Activated B cell treated with CpG ODN at 0.5 μM for 24 hours (primary cell): ENCODE measurements at regions of chr16 and their contacts with region 1.

Region 1: DNA sequence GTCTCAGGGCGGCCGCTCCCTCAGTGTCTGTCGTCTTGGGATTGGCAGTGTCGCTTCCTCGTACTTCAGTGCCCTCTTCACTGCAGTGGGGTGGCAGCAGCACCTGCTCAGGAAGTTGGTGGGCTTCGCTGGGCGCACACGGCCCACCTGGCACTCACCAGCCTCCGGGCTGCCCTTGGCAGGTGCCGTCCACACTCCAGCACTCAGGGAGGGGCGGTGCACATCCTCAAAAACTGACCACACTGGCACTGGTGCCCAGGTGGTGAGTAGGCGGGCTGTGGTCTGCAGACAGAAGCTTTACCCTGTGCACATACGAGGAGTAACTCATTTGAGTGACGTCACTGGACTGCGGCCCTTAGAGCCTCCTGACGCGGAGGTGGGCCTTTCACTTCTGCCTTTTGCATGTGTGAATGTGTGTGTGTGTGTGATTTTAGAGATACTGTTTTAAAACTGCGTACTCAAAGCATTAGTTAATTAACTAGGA is 94.6 kb downstream of the BANP start:
- DNase-seq: peak; percentile 83
- ATAC-seq: peak; percentile 72
- H3K4me3 Mint-ChIP-seq: peak overlapping the region; percentile 77
- H3K27ac Mint-ChIP-seq: peak overlapping the region; percentile 98
- H3K4me1 Mint-ChIP-seq: peaks cover 83% of the 10 kb centered on the region
- H3K27me3 Mint-ChIP-seq: no peaks in the 10 kb centered on the region
- CTCF ChIP-seq: no peak

Region 2: DNA sequence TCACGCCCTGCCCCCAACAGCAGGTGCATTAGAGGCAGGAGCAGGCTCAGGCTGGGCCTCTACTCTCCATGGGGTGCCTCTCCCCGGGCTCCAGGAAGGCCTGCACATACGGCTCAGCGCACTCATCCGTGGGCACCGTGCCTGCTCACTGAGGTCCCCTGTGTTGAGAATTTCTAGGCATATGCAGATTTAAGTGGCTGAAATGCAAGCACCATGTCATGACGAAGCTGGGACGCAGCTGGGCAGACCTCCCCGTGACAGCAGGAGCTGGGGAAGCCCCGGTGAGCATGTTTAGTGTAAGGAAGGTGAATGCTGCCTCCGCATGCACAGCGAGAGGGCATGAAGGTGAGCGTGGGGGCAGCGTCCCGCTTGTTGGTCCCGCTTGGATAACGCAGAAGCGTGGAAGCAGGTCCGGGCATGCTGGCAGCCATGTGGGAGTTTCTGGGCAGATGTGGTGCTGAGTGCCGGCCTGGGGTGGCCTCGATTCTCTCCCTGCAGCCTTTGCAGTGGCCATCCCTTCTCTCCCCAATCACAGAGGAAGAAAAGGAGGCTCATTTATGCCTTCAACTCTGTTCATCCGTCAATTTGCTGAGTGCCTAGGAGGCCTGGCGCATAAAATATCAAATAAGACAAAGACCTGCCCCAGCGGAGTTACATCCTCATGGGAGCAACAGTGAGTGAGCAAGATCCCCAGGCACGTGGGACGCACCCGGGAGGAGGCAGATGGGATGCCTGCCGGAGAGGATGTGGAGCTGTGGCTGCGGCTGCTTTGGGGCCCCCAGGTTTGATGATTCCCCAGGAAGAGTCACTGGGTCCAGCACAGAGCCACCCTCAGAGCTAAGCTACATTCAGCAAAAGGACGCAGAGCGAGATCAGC is 121.2 kb before region 1 on chr16:
- CTCF ChIA-PET with region 1: no interaction called
- POLR2A ChIA-PET with region 1: no interaction called
- intact Hi-C with region 1: loop called (anchors 10 kb)
- DNase-seq: peak; percentile 61
- ATAC-seq: peak; percentile 81
- H3K4me3 Mint-ChIP-seq: peak overlapping the region; percentile 64
- H3K27ac Mint-ChIP-seq: peak overlapping the region; percentile 70
- H3K4me1 Mint-ChIP-seq: peaks cover 35% of the 10 kb centered on the region
- H3K27me3 Mint-ChIP-seq: peaks cover 3% of the 10 kb centered on the region
- CTCF ChIP-seq: no peak

Region 3: DNA sequence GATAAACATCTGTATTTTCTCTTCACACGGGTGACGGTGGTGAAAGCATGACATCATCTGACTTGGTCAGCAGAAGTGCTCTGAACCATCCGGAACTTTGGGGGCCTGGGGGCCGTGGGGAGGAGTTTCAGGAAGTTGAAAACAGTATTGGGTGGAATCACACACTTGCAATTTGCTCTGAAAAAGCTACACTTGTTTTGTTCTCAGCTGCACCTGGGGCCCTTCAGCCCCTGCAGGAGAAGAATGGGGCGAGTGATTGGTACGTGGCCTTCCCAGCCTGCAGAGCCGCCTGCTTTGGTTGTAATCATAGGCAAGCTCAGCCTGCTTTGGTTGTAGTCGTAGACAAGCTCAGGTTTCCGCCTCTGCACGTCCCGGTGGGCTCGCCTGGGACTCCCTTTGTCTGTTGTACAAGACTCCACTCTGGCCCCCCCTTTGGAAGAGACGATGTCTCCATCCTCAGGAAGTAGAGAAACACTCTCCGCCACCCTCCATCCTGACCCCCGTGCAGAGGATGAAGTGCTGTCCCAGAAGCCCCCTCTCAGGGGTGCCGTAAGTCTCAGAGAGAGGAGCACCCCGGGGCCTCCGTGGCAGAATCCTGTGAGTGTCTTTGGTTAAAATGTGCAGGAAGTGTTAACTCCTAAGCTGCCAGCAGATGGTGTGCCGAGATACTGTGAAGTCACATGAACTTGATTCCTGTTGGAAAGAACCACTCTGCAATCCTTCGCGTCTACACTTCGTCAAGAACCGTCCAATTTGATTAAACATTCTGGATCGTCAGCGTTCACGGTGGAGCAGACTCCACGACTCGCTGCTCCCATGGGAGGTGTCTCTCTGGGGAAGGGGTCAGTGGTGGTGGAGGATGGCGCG is 89.3 kb before region 1 on chr16:
- CTCF ChIA-PET with region 1: no interaction called
- POLR2A ChIA-PET with region 1: interaction called, 11 read pairs
- intact Hi-C with region 1: loop called (anchors 1 kb)
- DNase-seq: peak; percentile 51
- ATAC-seq: peak; percentile 52
- H3K4me3 Mint-ChIP-seq: peak overlapping the region; percentile 79
- H3K27ac Mint-ChIP-seq: peak overlapping the region; percentile 91
- H3K4me1 Mint-ChIP-seq: peaks cover 92% of the 10 kb centered on the region
- H3K27me3 Mint-ChIP-seq: no peaks in the 10 kb centered on the region
- CTCF ChIP-seq: no peak

Region 4: GRCh38 chr16:87982491-87983415 is 63.1 kb before region 1 on chr16:
- CTCF ChIA-PET with region 1: no interaction called
- POLR2A ChIA-PET with region 1: no interaction called
- intact Hi-C with region 1: loop called (anchors 10 kb)
- DNase-seq: no peak
- ATAC-seq: no peak
- H3K4me3 Mint-ChIP-seq: peak overlapping the region; percentile 41
- H3K27ac Mint-ChIP-seq: peak overlapping the region; percentile 89
- H3K4me1 Mint-ChIP-seq: peaks cover 44% of the 10 kb centered on the region
- H3K27me3 Mint-ChIP-seq: no peaks in the 10 kb centered on the region
- CTCF ChIP-seq: no peak

Region 5: DNA sequence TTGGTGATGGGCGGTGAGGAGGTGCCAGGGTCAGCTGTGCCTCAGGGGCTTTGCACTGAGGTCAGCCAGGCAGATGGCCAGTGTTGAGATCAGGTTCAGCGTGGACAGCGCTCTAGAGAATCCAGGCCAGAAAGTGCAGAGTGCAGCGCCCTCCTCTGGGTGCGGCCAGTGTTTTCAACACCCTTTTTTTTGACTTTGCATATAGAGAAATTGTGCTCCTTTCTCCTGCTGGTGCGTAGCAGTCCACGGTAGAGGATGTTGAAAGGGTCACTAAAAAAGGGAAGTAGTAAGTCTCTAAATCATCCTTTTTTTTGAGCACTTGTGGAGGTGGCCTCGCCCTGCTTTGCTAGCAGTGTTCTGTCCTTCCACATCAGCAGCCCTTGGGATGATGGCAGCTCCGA is 40.7 kb before region 1 on chr16:
- CTCF ChIA-PET with region 1: no interaction called
- POLR2A ChIA-PET with region 1: no interaction called
- intact Hi-C with region 1: loop called (anchors 2 kb)
- DNase-seq: peak; percentile 20
- ATAC-seq: peak; percentile 91
- H3K4me3 Mint-ChIP-seq: peak overlapping the region; percentile 26
- H3K27ac Mint-ChIP-seq: peak overlapping the region; percentile 61
- H3K4me1 Mint-ChIP-seq: peaks cover 37% of the 10 kb centered on the region
- H3K27me3 Mint-ChIP-seq: no peaks in the 10 kb centered on the region
- CTCF ChIP-seq: no peak

Region 6: GRCh38 chr16:88069397-88070168 is 23.7 kb after region 1 on chr16:
- CTCF ChIA-PET with region 1: no interaction called
- POLR2A ChIA-PET with region 1: interaction called, 23 read pairs
- intact Hi-C with region 1: loop called (anchors 1 kb)
- DNase-seq: peak; percentile 79
- ATAC-seq: peak; percentile 93
- H3K4me3 Mint-ChIP-seq: peak overlapping the region; percentile 74
- H3K27ac Mint-ChIP-seq: peak overlapping the region; percentile 96
- H3K4me1 Mint-ChIP-seq: peaks cover 50% of the 10 kb centered on the region
- H3K27me3 Mint-ChIP-seq: no peaks in the 10 kb centered on the region
- CTCF ChIP-seq: no peak